H1 (cell line): ENCODE measurements at regions of chr11 and their contacts with region 1.

Region 1: GRCh38 chr11:123103326-123103980 is 41.5 kb upstream of the HSPA8 start:
- DNase-seq: no peak
- H3K4me3 ChIP-seq: no peak overlapping the region
- H3K27ac ChIP-seq: no peak overlapping the region
- H3K4me1 ChIP-seq: peaks cover 0 to 5% (median 1%) of the 10 kb centered on the region in 4 experiments; a peak in 5 of 7 replicates
- H3K27me3 ChIP-seq: no peaks in the 10 kb centered on the region
- CTCF ChIP-seq: peak in 2 of 3 experiments; percentile 59 to 71; a peak in 3 of 4 replicates
- EP300 ChIP-seq: no peak
- POLR2A ChIP-seq: no peak
- RAD21 ChIP-seq: peak; percentile 72 to 79

Region 2: GRCh38 chr11:123054301-123055065 is 49.0 kb before region 1 on chr11:
- CTCF ChIA-PET with region 1: interaction called, 12 read pairs
- POLR2A ChIA-PET with region 1: interaction called, 3 read pairs
- DNase-seq: no peak
- H3K4me3 ChIP-seq: no peak overlapping the region
- H3K27ac ChIP-seq: no peak overlapping the region
- H3K4me1 ChIP-seq: peaks cover 0 to 5% (median 2%) of the 10 kb centered on the region in 4 experiments; a peak in 4 of 7 replicates
- H3K27me3 ChIP-seq: no peaks in the 10 kb centered on the region
- CTCF ChIP-seq: peak in 2 of 3 experiments; percentile 66 to 68; a peak in 3 of 4 replicates
- EP300 ChIP-seq: no peak
- POLR2A ChIP-seq: peak in 1 of 2 experiments; percentile 18; a peak in 1 of 3 replicates
- RAD21 ChIP-seq: peak; percentile 70 to 80

Region 3: DNA sequence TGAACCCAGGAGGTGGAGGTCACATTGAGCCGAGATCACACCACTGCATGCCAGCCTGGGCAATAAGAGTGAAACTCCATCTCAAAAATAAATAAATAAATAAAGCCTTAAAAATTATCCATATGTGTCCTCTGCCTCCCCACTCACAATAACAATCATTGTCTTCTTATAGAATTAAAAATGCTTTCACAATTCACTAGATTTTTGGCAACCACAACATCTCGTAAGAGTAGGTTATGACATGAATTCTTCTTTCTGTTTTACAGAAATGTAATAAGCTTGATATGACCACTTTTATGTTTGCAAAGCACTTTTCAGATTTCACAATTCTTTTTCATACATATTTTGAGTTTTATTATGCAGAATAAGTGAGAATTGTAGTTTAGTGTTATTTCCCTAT is 13.0 kb after region 1 on chr11:
- CTCF ChIA-PET with region 1: interaction called, 30 read pairs
- POLR2A ChIA-PET with region 1: no interaction called
- DNase-seq: no peak
- H3K4me3 ChIP-seq: no peak overlapping the region
- H3K27ac ChIP-seq: no peak overlapping the region
- H3K4me1 ChIP-seq: no peaks in the 10 kb centered on the region
- H3K27me3 ChIP-seq: no peaks in the 10 kb centered on the region
- CTCF ChIP-seq: no peak
- EP300 ChIP-seq: no peak
- POLR2A ChIP-seq: no peak
- RAD21 ChIP-seq: no peak

Region 4: DNA sequence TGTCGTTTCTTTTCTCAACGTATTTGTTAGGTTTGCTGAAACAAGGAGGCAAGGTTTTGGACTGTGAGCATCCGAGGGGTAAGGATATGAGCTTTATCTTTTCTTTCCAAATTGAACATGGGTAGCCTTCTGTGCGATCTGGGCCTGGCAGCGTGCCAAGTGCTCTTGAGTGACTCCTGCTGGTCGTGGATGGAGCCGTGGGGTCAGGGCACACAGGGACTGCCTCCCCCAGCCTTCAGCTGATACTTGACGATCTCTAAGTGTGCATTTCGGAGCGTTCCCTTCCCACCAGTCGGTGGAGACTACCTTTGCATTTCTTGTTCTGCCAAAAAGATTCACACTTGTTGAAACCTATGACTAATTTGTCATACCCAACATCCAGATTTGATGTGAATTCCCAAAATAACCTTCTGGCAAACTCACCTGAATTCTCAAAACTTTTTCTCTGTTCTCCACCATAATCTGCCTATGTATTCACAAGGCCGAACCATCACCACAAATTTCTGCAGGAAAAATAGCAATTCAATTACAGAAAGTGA is 131.7 kb after region 1 on chr11:
- CTCF ChIA-PET with region 1: interaction called, 13 read pairs
- POLR2A ChIA-PET with region 1: no interaction called
- DNase-seq: peak in 1 of 2 experiments; percentile 89
- H3K4me3 ChIP-seq: no peak overlapping the region
- H3K27ac ChIP-seq: no peak overlapping the region
- H3K4me1 ChIP-seq: no peaks in the 10 kb centered on the region
- H3K27me3 ChIP-seq: no peaks in the 10 kb centered on the region
- CTCF ChIP-seq: peak; percentile 79 to 96 (median 92)
- EP300 ChIP-seq: no peak
- POLR2A ChIP-seq: no peak
- RAD21 ChIP-seq: peak; percentile 58 to 74

Region 5: DNA sequence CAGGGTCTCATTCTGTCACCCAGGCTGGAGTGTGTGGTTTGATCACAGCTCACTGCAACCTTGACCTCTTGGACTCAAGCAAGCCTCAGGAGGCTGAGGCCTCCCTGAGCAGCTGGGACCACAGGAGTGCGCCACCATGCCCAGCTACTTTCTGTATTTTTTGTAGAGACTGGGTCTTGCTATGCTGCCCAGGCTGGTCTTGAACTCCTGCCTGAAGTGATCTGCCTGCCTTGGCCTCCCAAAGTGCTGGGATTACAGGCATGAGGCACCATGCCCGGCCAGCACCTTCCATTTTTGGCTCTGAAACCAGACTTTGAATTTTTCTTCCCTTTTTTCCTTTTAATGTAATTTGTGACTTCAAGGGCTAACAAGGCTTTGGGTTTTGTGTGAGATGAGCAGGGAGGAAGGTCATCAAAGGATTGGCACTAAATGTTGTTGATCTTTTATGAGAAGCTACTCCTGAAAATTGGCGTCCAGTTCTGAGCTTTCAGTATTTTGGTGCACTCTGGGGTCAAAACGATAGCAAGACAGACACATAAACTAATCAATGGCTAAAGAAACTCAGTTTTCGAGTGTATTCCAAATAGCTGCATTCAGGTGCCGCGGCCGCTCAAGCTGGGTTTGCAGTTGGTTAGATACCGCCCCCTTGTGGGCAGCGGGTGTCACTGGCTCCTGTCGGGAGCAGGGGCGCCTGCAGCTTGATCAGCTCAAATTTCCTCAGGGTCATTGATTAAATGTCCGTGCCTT is 143.5 kb after region 1 on chr11:
- CTCF ChIA-PET with region 1: interaction called, 286 read pairs
- POLR2A ChIA-PET with region 1: no interaction called
- DNase-seq: peak; percentile 61 to 92
- H3K4me3 ChIP-seq: no peak overlapping the region
- H3K27ac ChIP-seq: no peak overlapping the region
- H3K4me1 ChIP-seq: peaks cover 0 to 5% (median under 1%) of the 10 kb centered on the region in 4 experiments; a peak in 2 of 7 replicates
- H3K27me3 ChIP-seq: no peaks in the 10 kb centered on the region
- CTCF ChIP-seq: peak; percentile 94 to 98 (median 95)
- EP300 ChIP-seq: no peak
- POLR2A ChIP-seq: no peak
- RAD21 ChIP-seq: peak; percentile 99

Region 6: DNA sequence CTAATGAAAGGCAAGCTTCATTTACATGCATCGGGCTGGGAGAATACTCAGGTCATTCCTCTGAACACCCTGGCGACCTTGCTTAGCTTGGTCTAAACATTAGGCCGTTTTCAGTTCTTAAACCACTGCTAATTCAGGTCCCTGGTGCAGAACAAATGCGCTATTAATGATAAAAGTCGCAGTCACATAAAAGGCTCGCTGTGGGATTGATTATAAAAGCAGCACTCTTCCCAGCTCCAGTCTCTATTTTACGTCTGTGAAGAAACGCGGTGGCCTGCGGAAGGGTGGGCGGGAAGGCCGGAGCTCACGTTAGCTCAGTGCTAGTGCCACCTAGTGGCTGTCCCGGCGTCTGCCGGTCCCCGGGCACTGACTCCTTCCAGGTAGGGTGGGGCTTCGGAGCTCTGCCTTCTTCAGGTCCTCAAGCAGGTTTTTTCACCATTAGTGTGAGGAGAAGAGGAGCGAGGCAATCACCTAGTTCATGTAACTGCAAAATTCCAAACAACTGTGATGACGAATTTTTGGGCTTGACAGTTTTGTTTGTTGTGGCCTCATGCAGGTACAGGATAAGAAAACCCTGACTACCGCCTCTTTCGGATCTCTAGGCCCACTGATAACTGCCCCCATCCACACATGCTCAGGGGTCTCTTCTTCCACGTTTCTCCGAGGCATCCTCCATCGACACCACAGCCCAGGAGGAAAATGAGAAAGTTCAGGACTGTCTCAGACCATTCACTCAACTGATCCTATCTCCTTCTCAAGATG is 158.1 kb after region 1 on chr11:
- CTCF ChIA-PET with region 1: interaction called, 286 read pairs
- POLR2A ChIA-PET with region 1: no interaction called
- DNase-seq: peak; percentile 68 to 97
- H3K4me3 ChIP-seq: peak overlapping the region in 2 of 4 experiments; percentile 34 to 38; a peak in 1 of 8 replicates
- H3K27ac ChIP-seq: no peak overlapping the region
- H3K4me1 ChIP-seq: peaks cover 0 to 2% (median 0%) of the 10 kb centered on the region in 4 experiments; a peak in 1 of 7 replicates
- H3K27me3 ChIP-seq: peaks cover 0 to 2% (median 0%) of the 10 kb centered on the region in 4 experiments; a peak in 1 of 7 replicates
- CTCF ChIP-seq: peak; percentile 90 to 97 (median 95)
- EP300 ChIP-seq: no peak
- POLR2A ChIP-seq: peak in 1 of 2 experiments; percentile 57; a peak in 1 of 3 replicates
- RAD21 ChIP-seq: peak; percentile 85 to 88

Region 7: DNA sequence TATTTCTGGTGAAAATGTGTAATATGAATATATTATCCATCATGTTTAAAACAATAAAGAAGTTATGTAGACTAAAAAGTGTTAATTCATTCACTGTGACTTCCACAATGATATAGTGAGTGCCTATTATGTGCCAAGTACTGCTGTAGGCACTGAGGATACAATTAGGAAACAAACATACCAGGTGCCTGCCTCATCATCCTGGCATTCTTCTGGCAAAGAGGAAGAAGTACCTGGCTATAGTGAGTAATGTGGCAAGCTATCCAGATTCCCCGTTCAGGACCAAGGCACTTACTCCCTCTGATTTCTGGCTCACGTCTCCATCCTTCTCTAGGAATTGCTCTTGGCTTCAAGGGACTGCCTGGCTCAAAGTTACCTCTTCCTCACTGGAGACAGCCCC is 169.1 kb after region 1 on chr11:
- CTCF ChIA-PET with region 1: interaction called, 10 read pairs
- POLR2A ChIA-PET with region 1: no interaction called
- DNase-seq: no peak
- H3K4me3 ChIP-seq: no peak overlapping the region
- H3K27ac ChIP-seq: no peak overlapping the region
- H3K4me1 ChIP-seq: no peaks in the 10 kb centered on the region
- H3K27me3 ChIP-seq: no peaks in the 10 kb centered on the region
- CTCF ChIP-seq: no peak
- EP300 ChIP-seq: no peak
- POLR2A ChIP-seq: no peak
- RAD21 ChIP-seq: no peak